ENCODE measurements at regions of chr4 and their contacts with region 1.

Region 1: DNA sequence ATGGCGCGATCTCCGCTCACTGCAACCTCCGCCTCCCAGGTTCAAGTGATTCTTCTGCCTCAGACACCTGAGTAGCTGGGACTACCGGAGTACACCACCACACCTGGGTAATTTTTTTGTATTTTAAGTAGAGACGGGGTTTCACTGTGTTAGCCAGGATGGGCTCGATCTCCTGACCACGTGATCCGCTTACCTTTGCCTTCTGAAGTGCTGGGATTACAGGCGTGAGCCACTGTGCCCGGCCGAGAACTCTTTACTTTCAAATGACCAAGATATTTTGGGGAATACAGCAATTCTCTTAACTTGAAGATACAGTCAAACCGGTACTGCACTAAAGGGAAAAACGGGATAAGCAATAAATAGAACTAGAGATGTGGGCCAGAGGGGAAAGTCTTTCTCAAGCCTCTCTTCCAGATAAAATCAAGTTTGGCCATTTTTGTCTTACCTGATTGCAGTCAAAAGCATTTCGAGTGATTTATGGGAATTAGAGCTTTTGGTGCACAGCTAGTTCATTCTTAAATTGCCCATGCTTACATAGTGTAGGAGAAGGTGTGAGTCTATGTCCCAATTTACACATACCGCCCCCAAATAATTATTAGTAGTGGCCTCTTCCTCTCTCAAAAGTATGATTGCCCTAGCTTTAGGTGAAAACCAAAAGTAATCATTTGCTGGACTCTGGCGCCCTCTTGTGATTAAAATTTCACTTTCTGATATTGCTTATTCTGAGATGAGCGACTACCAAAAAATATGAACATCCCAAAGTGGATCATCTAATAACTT is 53.2 kb upstream of the ABCG2 start:
- DNase-seq: peak; percentile 68
- H3K4me3 Mint-ChIP-seq: no peak overlapping the region
- H3K27ac Mint-ChIP-seq: no peak overlapping the region
- H3K4me1 Mint-ChIP-seq: no peaks in the 10 kb centered on the region
- H3K27me3 Mint-ChIP-seq: peaks cover 21% of the 10 kb centered on the region
- CTCF ChIP-seq: peak; percentile 73

Region 2: DNA sequence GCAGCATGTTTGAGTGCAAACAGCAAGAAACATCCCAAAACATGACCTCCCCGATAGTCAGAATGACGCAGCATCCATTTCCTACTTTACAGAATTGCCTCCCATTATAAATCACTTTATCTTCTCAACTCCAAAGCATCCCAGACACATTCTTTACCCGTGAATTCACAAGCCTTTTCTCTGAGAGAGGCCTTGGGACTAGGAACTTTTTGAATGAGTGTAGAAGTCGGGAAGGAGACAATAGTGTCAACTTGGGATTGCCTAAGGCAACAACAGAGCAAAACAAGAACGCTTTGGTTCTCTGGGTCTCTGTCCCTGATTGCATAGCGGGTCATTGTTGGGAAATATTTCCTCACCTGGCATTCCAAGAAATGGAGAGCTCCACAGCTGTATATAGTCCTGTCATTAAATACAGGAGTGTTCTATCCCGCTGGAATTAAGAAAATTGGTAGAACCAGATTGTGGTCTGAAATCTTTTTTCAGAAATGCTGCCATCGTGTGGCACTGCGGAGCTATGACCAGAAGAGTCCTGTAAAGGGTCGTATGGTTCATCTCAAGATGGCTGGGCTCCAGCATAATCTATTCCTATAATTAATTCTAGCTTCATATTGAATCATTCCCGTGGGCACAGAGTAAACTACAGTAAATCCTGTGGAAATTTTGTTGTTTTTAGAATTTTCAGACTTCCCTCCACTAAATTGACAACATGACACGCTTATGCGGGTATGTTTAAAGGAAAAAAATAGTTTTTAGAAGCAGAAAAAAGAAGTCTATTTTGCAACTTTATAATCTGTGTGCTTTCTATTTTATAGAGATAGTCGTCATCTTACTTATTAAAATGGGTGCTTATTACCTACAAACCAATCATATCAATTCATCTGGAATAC is 238.1 kb before region 1 on chr4:
- CTCF ChIA-PET with region 1: interaction called, 8 read pairs
- POLR2A ChIA-PET with region 1: no interaction called
- intact Hi-C with region 1: loop called (anchors 5 kb)
- DNase-seq: peak; percentile 70
- H3K4me3 Mint-ChIP-seq: peak overlapping the region; percentile 19
- H3K27ac Mint-ChIP-seq: no peak overlapping the region
- H3K4me1 Mint-ChIP-seq: peaks cover 11% of the 10 kb centered on the region
- H3K27me3 Mint-ChIP-seq: no peaks in the 10 kb centered on the region
- CTCF ChIP-seq: peak; percentile 84

Region 3: GRCh38 chr4:88017516-88018297 is 194.0 kb before region 1 on chr4:
- CTCF ChIA-PET with region 1: interaction called, 11 read pairs
- POLR2A ChIA-PET with region 1: no interaction called
- intact Hi-C with region 1: no loop called
- DNase-seq: peak; percentile 81
- H3K4me3 Mint-ChIP-seq: peak overlapping the region; percentile 5
- H3K27ac Mint-ChIP-seq: peak overlapping the region; percentile 78
- H3K4me1 Mint-ChIP-seq: peaks cover 24% of the 10 kb centered on the region
- H3K27me3 Mint-ChIP-seq: no peaks in the 10 kb centered on the region
- CTCF ChIP-seq: no peak

Region 4: GRCh38 chr4:88043001-88043400 is 168.7 kb before region 1 on chr4:
- CTCF ChIA-PET with region 1: interaction called, 17 read pairs
- POLR2A ChIA-PET with region 1: no interaction called
- intact Hi-C with region 1: no loop called
- DNase-seq: no peak
- H3K4me3 Mint-ChIP-seq: no peak overlapping the region
- H3K27ac Mint-ChIP-seq: no peak overlapping the region
- H3K4me1 Mint-ChIP-seq: no peaks in the 10 kb centered on the region
- H3K27me3 Mint-ChIP-seq: no peaks in the 10 kb centered on the region
- CTCF ChIP-seq: no peak

Region 5: DNA sequence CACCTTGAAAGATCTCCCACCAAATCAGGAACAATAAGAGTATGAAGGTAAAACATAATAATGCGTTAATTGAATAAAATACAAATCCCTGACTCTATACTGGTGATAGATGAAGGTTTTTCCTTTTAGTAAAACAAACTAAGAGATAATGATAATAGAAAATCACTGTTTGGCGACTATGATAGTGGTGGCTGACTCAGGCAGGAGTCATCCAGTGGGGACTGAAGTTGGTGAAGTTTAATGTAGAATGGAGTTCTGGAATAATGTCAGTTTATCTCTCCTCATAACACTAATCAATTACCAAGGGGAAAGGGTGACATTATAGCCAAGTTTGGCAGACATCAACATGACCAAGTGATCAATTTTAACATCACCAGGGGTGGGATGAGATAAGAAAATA is 74.6 kb before region 1 on chr4:
- CTCF ChIA-PET with region 1: no interaction called
- POLR2A ChIA-PET with region 1: no interaction called
- intact Hi-C with region 1: no loop called
- DNase-seq: no peak
- H3K4me3 Mint-ChIP-seq: no peak overlapping the region
- H3K27ac Mint-ChIP-seq: no peak overlapping the region
- H3K4me1 Mint-ChIP-seq: no peaks in the 10 kb centered on the region
- H3K27me3 Mint-ChIP-seq: no peaks in the 10 kb centered on the region
- CTCF ChIP-seq: no peak

Region 6: GRCh38 chr4:88244816-88245579 is 33.3 kb after region 1 on chr4:
- CTCF ChIA-PET with region 1: no interaction called
- POLR2A ChIA-PET with region 1: no interaction called
- intact Hi-C with region 1: no loop called
- DNase-seq: no peak
- H3K4me3 Mint-ChIP-seq: no peak overlapping the region
- H3K27ac Mint-ChIP-seq: no peak overlapping the region
- H3K4me1 Mint-ChIP-seq: no peaks in the 10 kb centered on the region
- H3K27me3 Mint-ChIP-seq: no peaks in the 10 kb centered on the region
- CTCF ChIP-seq: no peak

Region 7: DNA sequence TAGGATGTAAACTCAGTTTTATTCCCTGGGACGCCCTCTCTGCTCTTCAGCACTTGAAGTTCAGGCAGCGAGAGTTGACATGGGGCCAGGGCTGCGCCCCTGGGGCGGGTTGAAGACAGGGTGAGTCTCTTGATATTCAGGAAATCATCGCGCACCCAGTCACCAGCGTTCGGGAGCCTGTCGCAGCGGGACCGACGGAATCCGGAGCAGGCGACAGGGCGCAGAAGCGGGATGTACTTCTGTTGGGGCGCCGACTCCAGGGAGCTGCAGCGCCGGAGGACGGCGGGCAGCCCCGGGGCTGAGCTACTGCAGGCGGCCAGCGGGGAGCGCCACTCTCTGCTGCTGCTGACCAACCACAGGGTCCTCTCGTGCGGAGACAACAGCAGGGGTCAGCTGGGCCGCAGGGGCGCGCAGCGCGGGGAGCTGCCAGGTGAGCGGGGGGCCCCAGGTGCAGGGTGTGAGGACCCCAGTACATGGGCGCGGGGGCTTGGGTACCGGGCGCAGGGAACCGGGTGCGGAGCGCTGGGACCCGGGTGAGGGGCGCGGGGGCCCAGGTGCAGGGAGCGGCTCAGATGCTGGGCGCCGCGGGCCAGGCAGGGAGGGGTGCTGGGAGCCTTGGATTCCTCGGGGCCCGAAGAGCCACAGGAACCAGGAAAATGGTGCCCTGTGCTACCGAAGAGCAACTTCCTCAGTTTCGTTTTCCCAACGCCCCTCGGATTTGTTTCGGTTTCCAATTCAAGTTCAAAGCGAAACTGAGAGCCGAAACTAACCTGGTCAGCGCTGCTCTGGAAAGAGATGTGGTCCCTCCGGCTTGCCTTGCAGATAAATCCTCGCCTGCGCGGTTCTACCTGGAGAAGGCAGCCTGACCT is 167.3 kb after region 1 on chr4 and contains the start of gene HERC6:
- CTCF ChIA-PET with region 1: no interaction called
- POLR2A ChIA-PET with region 1: no interaction called
- intact Hi-C with region 1: loop called (anchors 5 kb)
- DNase-seq: peak; percentile 94
- H3K4me3 Mint-ChIP-seq: peak within 1 kb of the TSS; percentile 90
- H3K27ac Mint-ChIP-seq: peak within 1 kb of the TSS; percentile 66
- H3K4me1 Mint-ChIP-seq: no peaks in the 10 kb centered on the region
- H3K27me3 Mint-ChIP-seq: no peaks in the 10 kb centered on the region
- CTCF ChIP-seq: peak; percentile 57
- total RNA-seq, gene HERC6: 1.7 and 2.4 TPM in 2 replicates

Region 8: DNA sequence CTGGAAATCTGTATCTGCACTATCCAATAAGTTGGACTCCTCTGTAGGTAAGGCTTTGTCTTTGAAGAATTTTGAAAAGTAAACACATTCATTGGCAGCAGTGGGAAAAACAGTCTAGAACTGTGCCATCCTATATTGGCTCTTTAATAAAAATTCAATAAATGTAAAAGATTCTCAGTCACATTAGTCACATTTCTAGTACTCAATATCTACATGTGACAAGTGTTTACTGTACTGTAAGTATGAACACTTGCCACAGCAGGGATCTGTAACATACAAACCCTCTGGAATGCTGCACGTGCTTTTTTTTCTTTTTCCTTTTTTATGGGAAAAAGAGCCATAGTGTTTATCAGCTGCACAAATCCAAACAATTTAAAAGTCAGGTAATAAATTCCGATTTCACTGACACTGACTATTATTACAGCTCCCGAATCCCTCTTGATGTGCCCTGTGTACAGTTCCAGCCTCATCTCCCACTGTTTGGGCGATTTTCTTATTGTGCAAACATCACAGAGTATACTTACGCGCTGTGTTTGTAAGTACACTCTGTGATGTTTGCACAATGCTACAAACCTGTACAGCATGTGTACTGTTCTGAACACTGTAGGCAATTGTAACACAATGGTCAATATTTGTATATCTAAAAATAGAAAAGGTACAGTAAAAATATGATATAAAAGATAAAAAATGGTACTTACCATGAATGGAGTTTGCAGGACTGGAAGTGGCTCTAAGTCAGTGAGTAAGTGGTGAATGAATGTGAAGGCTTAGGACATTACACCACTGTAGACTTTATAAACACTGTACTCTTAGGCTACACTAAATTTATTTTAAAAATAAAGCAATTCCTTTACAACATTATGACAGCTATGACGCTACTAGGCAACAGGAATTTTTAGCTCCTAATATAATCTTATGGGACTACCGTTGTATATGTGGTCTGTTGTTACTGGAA is 303.2 kb after region 1 on chr4:
- CTCF ChIA-PET with region 1: interaction called, 199 read pairs
- POLR2A ChIA-PET with region 1: interaction called, 3 read pairs
- intact Hi-C with region 1: no loop called
- DNase-seq: no peak
- H3K4me3 Mint-ChIP-seq: no peak overlapping the region
- H3K27ac Mint-ChIP-seq: no peak overlapping the region
- H3K4me1 Mint-ChIP-seq: no peaks in the 10 kb centered on the region
- H3K27me3 Mint-ChIP-seq: no peaks in the 10 kb centered on the region
- CTCF ChIP-seq: no peak

Measured in MCF 10A (cell line).